ENCODE measurements at regions of chr17 and their contacts with region 1.

Region 1: DNA sequence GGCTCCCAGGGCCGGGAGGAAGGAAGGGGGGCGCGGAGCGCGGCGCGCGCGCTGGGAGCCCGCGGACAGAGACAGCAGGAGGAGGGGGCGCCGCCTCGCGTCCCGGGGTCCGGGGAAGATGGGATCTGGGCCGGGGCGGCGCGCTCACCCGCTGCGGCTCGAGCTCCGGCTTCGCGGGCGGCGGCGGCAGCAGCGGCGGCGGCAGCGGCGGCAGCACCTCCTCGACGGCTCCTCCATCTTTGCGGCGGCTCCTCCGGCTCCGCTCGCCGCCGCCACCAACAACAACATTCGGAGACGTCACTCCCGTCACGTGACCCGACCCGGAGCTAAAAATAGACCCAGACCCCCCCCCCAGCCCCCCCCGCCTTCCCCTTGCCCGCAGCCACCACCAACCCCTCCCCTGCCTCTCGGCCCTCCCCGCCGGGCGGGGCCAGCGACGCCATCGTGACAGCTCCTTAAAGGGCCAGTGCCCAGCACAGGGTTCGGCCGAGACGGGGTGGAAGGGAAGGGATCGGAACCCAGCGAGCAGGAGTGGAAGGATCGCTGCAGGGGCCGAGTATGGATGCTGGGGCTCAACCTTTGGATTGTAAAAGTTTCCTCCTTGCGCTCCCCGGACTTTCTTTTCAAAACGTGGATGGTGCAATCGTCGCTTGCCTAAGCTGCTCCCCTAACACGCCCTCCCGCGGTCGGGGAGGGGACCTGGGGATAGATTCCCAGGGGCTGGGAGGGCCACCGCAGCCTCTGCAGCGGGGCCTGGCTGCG is at the start of gene HDAC5:
- DNase-seq: peak; percentile 96 to 97
- H3K4me3 ChIP-seq: peak within 1 kb of the TSS; percentile 66 to 96 (median 82)
- H3K27ac ChIP-seq: peak within 1 kb of the TSS; percentile 93 to 95 (median 94)
- H3K4me1 ChIP-seq: peaks cover 39 to 47% of the 10 kb centered on the region in 2 donors
- H3K27me3 ChIP-seq: no peaks in the 10 kb centered on the region
- CTCF ChIP-seq: peak in 5 of 6 experiments; percentile 45 to 60 (median 52)
- POLR2A ChIP-seq: peak in 1 of 2 donors; percentile 92
- total RNA-seq, gene HDAC5: 69.5 to 142 (median 107) TPM

Region 2: DNA sequence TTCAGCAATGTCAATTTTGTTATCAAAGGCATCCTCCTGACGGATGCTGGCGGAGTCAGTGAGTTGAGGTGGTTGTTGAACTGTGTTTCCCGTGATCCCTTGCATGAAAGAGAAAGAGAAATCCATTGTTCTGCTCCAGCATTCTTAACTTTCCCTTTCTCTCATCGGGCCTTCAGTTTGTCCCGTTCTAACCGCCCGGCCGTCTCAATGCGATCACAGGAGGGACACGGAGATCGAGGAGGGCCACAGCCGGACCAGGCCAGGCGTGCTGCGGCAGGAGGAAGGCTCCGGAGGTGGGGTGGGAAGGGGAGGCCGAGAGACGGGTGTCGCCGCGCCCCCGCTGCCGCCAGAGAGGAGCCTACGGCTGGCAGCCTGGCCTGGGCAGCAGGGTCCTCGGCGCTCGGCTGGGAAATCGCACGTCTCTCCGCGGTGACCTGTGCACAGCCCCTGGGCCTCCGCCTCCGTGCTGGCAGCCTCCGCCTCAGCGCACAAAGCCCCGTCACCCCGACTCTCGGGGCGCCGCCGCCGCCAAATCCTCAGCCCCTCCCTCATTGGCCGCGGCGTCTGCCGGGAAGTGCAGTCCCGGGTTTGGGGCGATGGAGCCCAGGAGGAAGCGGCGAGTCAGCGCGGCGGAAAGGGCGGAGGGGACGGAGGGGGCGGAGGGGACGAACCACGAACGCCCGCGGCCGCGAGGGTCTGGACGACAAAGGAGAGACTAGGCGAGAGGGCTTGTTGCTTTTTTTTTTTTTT is 403.1 kb before region 1 on chr17:
- intact Hi-C with region 1: no loop called
- DNase-seq: peak; percentile 70 to 74
- H3K4me3 ChIP-seq: peak overlapping the region; percentile 39 to 95 (median 66)
- H3K27ac ChIP-seq: peak overlapping the region; percentile 88 to 96 (median 89)
- H3K4me1 ChIP-seq: no peaks in the 10 kb centered on the region
- H3K27me3 ChIP-seq: no peaks in the 10 kb centered on the region
- CTCF ChIP-seq: no peak
- POLR2A ChIP-seq: peak in 1 of 2 donors; percentile 63

Region 3: DNA sequence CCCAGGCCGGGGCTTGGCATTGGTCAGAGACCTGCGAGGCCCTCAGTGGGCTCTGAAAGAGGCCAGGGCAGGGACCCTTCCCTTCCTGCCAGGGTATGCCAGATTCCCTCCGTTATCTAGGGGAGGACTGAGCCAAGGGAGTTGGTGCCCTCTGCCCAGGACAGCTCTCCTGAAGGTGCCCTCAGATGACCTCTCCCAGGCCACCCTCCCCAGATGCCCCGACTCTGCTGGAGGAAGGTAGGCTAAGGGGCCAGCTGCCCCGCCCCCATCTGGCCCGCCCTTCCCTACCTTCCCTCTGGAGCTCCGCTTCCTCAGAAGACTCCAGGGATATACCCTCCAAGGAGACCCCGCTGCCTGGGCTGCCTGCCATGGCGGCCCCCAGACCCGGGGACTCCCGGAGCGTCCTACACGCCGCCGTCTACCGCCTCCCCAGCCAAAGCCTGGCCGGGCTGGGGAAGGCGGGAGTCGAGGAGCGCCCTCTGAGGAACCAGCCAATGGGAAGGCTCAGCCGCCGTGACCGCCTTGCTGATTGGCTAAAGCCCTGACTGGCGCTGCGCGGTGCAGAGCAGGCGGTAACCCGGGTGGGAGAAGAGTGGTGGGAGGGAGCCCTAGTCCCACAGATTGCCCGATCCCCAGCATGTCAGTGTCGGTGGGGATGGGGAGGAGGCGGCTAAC is 223.2 kb before region 1 on chr17:
- intact Hi-C with region 1: loop called (anchors 10 kb)
- DNase-seq: peak; percentile 86 to 87
- H3K4me3 ChIP-seq: peak overlapping the region in 2 of 3 donors; percentile 14 to 23
- H3K27ac ChIP-seq: no peak overlapping the region
- H3K4me1 ChIP-seq: peaks cover 7 to 17% of the 10 kb centered on the region in 2 donors
- H3K27me3 ChIP-seq: no peaks in the 10 kb centered on the region
- CTCF ChIP-seq: no peak
- POLR2A ChIP-seq: no peak

Region 4: DNA sequence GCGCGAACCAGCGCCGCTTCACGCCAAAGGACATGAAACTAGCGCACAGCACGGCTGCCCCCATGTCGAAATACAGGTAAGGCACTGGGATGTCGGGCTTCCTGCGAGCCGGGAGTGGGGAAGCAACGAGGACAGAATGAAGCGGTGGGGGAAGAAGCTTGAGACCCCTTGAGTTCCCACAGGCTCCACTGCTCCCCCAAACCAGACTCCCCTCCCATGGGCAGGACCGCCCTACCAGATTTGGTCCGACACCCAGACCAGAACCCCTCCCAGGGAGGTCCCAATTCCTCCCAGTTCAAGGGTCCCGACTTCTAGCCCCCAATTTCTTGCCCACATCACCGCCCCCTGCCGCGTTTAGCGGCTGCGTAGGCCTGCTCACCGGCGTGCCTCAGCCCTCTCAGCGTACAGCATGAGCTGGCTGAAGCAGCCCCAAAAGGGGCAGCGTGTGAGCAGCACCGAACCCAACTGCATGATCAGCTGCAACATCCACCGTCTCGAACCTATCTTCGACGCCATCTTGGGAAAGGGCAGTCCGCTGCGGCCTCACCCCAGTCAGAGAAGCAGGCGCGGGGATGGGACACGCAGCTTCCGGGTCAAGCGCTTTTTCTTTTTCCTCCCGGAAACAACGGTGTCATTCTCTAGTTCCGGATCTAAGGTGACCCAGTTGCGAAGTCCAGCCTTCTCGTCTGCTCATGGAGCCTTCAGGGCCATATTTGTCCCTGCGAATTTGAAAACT is 108.9 kb before region 1 on chr17 and contains the start of gene TMEM101:
- intact Hi-C with region 1: loop called (anchors 10 kb)
- DNase-seq: peak; percentile 89 to 92
- H3K4me3 ChIP-seq: peak within 1 kb of the TSS; percentile 68 to 76 (median 71)
- H3K27ac ChIP-seq: peak within 1 kb of the TSS in 2 of 3 donors; percentile 50 to 65
- H3K4me1 ChIP-seq: peaks cover 4 to 14% of the 10 kb centered on the region in 2 donors
- H3K27me3 ChIP-seq: no peaks in the 10 kb centered on the region
- CTCF ChIP-seq: no peak
- POLR2A ChIP-seq: peak in 1 of 2 donors; percentile 55
- total RNA-seq, gene TMEM101: 33.6 to 56.9 (median 45.0) TPM

Region 5: DNA sequence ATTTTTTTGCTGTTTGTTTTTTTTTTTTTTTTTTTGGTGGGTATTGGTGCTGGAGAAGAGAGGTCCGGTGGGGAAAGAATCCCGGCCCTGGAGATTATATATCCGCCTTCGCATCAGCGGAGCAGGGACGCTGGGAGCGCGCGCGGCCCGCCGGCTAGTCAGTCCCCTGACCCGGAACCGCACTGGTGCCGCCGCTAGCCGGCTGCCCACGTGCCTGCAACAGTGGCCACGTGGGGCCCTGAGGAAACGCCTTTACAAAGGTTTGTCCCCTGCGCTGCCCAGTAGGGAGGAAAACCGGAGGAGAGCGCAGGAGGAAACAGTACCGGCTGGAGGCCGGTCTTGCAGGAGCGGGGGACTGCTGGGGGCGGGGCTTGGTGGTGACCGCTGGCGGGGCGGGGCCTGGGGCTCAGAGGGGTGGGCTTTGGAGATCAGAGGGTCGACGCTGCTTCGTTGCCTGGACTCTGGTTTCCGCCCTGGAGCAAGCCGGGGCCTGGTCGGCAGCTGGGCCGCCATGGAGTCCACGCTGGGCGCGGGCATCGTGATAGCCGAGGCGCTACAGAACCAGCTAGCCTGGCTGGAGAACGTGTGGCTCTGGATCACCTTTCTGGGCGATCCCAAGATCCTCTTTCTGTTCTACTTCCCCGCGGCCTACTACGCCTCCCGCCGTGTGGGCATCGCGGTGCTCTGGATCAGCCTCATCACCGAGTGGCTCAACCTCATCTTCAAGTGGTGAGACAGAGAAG is 52.9 kb before region 1 on chr17 and contains the start of gene G6PC3:
- intact Hi-C with region 1: loop called (anchors 10 kb)
- DNase-seq: peak; percentile 97
- H3K4me3 ChIP-seq: peak within 1 kb of the TSS; percentile 34 to 78 (median 76)
- H3K27ac ChIP-seq: peak within 1 kb of the TSS; percentile 55 to 88 (median 60)
- H3K4me1 ChIP-seq: peaks cover 20 to 24% of the 10 kb centered on the region in 2 donors
- H3K27me3 ChIP-seq: no peaks in the 10 kb centered on the region
- CTCF ChIP-seq: peak in 2 of 6 experiments; percentile 6 to 11
- POLR2A ChIP-seq: peak in 1 of 2 donors; percentile 78
- total RNA-seq, gene G6PC3: 41.4 to 104 (median 80.8) TPM